K562 (cell line): ENCODE measurements at regions of chr16 and their contacts with region 1.

Region 1: DNA sequence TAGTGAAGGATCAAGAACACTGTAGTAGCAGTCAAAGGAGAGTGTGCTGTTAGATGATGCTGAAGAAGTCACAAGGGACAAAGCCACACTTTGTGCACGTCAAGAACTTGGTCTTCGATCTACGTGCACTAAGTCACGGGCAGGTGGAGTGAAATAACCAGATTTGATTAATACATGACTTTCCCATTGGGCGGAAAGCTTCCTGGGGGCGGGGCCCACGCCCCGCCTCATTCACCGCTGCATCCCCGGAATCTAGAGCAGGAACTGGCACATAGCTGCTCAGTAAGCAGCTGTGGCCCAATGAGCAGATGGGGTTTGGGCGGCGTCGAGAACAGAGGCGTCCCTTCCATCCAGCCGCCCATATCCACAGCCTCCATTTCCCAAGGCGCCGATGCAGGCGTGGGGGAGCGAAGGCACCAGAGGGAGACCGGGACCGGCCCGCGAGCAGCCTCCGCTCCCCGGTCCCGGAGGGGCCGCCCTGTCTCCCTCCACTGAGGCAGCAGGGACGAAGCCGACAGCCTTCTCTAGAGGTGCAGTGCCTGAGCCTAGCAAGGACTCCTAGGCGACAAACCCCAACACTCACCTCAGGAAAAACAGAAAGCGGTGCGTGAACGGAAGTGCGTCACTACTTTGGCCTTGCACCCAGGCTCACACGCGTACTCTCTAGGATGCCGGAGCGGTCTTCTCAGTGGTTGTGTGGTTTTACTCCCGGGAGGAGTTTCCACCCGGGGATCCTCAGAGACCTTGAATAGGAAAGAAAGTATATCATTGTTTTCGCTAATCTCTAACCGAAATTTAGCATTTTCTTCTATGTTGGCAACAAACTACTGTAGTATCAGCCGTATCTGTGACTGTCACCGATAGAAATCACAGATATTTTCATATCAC is 4.9 kb downstream of the ZNF19 start:
- DNase-seq: peak; percentile 84 to 92 (median 86)
- ATAC-seq: peak; percentile 94
- H3K4me3 ChIP-seq: peak overlapping the region; percentile 85
- H3K27ac ChIP-seq: peak overlapping the region; percentile 74
- H3K4me1 ChIP-seq: peaks cover 2 to 9% of the 10 kb centered on the region in 2 experiments; a peak in 4 of 5 replicates
- H3K27me3 ChIP-seq: no peaks in the 10 kb centered on the region
- CTCF ChIP-seq: no peak
- EP300 ChIP-seq: no peak
- POLR2A ChIP-seq: peak; percentile 85
- RAD21 ChIP-seq: no peak

Region 2: GRCh38 chr16:71461686-71462648 is 22.3 kb before region 1 on chr16 and contains the start of gene ZNF23:
- CTCF ChIA-PET with region 1: no interaction called
- POLR2A ChIA-PET with region 1: interaction called, 5 read pairs
- in situ Hi-C with region 1: no loop called
- intact Hi-C with region 1: loop called (anchors 1 kb)
- DNase-seq: peak; percentile 87 to 96 (median 94)
- ATAC-seq: peak; percentile 99
- H3K4me3 ChIP-seq: peak within 1 kb of the TSS; percentile 85
- H3K27ac ChIP-seq: peak within 1 kb of the TSS; percentile 64
- H3K4me1 ChIP-seq: peaks cover 4 to 6% of the 10 kb centered on the region in 2 experiments; a peak in 1 of 5 replicates
- H3K27me3 ChIP-seq: no peaks in the 10 kb centered on the region; a peak in 1 of 5 replicates
- CTCF ChIP-seq: no peak
- EP300 ChIP-seq: 0 out of 2 replicates have a peak, but pooled peaks have one; percentile 21
- POLR2A ChIP-seq: peak; percentile 95
- RAD21 ChIP-seq: no peak; a peak in 1 of 4 replicates
- polyA plus RNA-seq, gene ZNF23: 4.7 to 7.2 TPM

Region 3: DNA sequence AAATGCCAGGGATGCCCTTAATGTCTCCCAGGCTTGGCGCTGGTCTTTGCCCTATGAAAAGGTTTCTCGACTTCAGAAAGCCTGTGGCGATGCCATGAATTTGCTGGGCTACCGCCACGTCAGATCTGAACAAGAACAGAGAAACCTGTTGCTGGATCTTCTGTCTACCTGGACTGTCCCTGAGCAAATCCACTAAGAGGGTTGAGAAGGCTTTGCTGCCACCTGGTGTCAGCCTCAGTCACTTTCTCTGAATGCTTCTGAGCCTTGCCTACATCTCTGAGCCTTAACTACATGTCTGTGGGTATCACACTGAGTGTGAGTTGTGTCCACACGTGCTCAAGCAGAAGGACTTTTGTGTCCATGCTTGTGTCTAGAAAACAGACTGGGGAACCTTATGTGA is 53.4 kb after region 1 on chr16:
- CTCF ChIA-PET with region 1: no interaction called
- POLR2A ChIA-PET with region 1: no interaction called
- in situ Hi-C with region 1: no loop called
- intact Hi-C with region 1: loop called (anchors 1 kb)
- DNase-seq: peak; percentile 47 to 64 (median 55)
- ATAC-seq: peak; percentile 90
- H3K4me3 ChIP-seq: no peak overlapping the region
- H3K27ac ChIP-seq: no peak overlapping the region
- H3K4me1 ChIP-seq: no peaks in the 10 kb centered on the region
- H3K27me3 ChIP-seq: peaks cover 9 to 21% of the 10 kb centered on the region in 2 experiments
- CTCF ChIP-seq: peak; percentile 72 to 73 (median 72)
- EP300 ChIP-seq: no peak
- POLR2A ChIP-seq: no peak
- RAD21 ChIP-seq: peak; percentile 33 to 73

Region 4: DNA sequence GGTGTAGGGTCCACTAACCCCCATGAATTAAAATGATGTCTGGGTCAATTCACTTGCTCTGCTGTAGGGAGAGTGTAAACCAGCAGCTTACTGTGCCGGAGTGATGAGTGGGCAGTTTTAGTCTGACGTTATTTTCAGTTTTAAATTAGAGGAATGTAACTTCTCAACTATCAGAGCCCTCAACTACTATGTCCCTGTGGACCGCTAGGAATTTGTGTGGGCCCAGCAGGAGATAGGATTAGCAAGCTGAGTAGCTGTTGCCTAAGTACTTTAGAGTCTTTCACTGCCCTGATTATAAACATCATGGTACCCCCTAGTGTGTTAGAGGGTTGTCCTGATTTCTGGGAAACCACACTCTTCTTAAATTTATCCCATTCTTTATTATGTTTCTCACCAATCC is 153.1 kb after region 1 on chr16:
- CTCF ChIA-PET with region 1: no interaction called
- POLR2A ChIA-PET with region 1: no interaction called
- in situ Hi-C with region 1: no loop called
- intact Hi-C with region 1: no loop called
- DNase-seq: no peak
- ATAC-seq: no peak
- H3K4me3 ChIP-seq: no peak overlapping the region
- H3K27ac ChIP-seq: no peak overlapping the region
- H3K4me1 ChIP-seq: no peaks in the 10 kb centered on the region
- H3K27me3 ChIP-seq: peaks cover 22 to 33% of the 10 kb centered on the region in 2 experiments
- CTCF ChIP-seq: no peak
- EP300 ChIP-seq: no peak
- POLR2A ChIP-seq: no peak
- RAD21 ChIP-seq: no peak

Region 5: DNA sequence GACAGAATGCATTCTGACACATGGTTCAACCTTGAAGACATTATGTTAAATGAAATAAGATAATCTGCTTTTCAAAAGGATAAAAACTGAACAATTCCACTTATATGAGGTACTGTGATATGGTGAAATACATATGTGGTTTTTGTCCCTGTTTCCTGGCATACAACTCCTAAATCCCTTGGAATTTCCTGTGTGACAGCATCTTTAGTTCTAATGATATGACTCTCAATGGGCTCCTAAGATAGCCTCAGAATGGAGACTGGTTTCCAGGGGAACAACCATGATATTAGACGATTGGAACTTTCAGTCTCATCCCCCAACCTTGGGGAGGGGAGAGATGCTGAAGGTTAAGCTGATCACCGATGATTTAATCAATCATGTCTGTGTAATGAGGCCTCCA is 277.9 kb after region 1 on chr16:
- CTCF ChIA-PET with region 1: no interaction called
- POLR2A ChIA-PET with region 1: no interaction called
- in situ Hi-C with region 1: no loop called
- intact Hi-C with region 1: no loop called
- DNase-seq: no peak
- ATAC-seq: no peak
- H3K4me3 ChIP-seq: no peak overlapping the region
- H3K27ac ChIP-seq: no peak overlapping the region
- H3K4me1 ChIP-seq: no peaks in the 10 kb centered on the region
- H3K27me3 ChIP-seq: no peaks in the 10 kb centered on the region
- CTCF ChIP-seq: no peak
- EP300 ChIP-seq: no peak
- POLR2A ChIP-seq: no peak
- RAD21 ChIP-seq: no peak